Right ventricle myocardium inferior (tissue), 1 donor: ENCODE measurements at regions of chr11 and their contacts with region 1.

Region 1: DNA sequence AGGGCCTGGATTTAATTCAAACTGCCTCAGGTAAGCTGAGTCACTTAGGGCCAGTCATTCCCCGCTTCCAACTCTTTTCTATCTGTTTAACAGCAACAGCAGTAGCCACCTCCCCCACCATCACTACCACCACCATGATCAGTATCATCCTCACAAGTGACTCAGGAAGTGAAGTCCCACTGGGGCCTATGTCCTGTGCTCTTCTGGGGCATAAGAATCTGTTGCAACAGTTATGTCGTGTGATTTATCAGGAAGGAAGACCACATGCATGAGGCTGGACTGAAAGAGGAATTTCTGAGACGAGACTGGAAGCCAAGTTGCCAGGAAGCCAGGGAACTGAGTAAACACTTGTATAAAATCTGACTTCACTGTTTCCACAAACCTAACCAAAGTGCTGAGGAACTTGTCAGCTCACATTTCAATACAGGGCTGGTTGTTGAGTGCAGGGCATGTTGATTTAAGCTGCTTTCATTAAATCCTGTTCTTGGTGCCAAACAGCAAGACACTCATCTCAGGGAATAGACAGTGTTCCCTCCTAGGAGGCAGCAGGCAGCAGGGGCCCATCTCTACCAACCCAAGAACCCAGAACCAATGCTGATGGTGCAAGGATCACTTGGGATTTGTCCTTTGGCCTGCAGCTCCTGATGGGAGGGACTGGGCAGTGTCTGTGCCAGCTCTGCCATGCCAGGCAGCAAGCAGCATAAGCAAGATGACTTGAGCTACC is 226.7 kb upstream of the NARS2 start:
- DNase-seq: no peak
- ATAC-seq: peak; percentile 41

Region 2: DNA sequence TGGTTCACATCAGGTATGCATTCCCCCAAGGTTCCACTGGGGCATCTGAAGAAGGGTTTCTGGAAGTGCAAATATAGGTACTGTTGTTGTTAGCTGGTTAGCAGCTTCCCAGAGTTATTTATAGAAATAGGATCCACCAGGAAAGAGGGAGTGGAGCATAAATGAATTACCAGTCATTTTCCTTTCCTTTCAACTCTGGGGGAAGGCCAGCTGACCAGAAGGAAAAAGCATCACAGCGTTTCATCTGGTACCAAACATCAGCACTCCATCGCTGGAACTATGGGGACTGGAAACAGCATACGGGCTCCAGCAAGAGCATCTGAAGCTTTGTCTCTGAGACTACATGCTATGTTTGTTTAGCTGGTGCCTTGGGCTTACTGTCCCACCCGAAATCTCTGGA is 151.6 kb after region 1 on chr11:
- intact Hi-C with region 1: loop called (anchors 5 kb)
- DNase-seq: no peak
- ATAC-seq: no peak